GM12878 (cell line): ENCODE measurements at regions of chr17 and their contacts with region 1.

Region 1: GRCh38 chr17:5065227-5065744 is 13.0 kb upstream of the ZFP3 start:
- DNase-seq: no peak
- ATAC-seq: no peak
- H3K4me3 ChIP-seq: no peak overlapping the region
- H3K27ac ChIP-seq: no peak overlapping the region
- H3K4me1 ChIP-seq: no peaks in the 10 kb centered on the region
- H3K27me3 ChIP-seq: no peaks in the 10 kb centered on the region
- CTCF ChIP-seq: no peak
- EP300 ChIP-seq: no peak
- POLR2A ChIP-seq: no peak
- RAD21 ChIP-seq: no peak

Region 2: DNA sequence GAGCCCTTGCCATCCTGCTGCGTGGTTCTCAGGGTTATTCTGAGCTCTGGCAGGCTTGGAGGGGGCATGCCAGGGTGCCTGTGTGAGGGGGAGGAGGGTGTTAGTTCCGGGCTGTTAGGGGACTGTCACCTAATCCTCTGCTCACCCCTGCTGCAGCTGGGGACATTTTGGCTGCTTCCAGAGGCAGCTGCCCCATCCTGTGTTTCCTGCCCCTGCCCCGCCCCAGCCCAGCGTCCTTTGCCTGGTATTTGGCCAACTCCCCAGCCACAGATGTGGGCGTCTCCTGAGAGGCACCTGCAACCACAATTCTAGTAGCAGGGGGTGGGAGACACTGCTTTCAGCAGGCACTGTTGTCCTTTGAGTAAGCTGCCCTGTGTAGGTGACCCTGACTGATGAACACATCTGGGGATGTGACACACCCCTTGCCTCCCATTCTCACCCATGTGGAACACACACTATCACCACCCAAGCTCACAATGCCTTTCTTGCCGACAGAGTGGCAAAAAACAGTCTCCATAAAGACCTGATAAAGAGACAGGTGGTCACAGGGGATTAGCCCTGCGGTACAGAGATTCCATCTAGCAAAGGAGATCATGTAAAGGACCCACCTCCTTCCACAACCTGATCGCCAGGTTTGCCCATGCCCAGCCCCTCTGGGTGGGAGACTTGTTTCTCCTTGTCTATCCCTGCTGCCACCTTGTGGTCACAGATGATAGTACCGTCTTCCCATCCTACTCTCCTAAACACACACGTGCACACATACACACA is 162.1 kb before region 1 on chr17 and contains the start of gene CHRNE:
- CTCF ChIA-PET with region 1: interaction called, 35 read pairs
- POLR2A ChIA-PET with region 1: no interaction called
- RAD21 ChIA-PET with region 1: no interaction called
- SMC1A ChIA-PET with region 1: interaction called, 5 read pairs
- in situ Hi-C with region 1: no loop called
- intact Hi-C with region 1: no loop called
- DNase-seq: peak; percentile 37
- ATAC-seq: peak; percentile 80
- H3K4me3 ChIP-seq: no peak within 1 kb of the TSS
- H3K27ac ChIP-seq: no peak within 1 kb of the TSS
- H3K4me1 ChIP-seq: peaks cover 20% of the 10 kb centered on the region
- H3K27me3 ChIP-seq: no peaks in the 10 kb centered on the region; a peak in 2 of 4 replicates
- CTCF ChIP-seq: peak; percentile 73 to 81 (median 77)
- EP300 ChIP-seq: no peak
- POLR2A ChIP-seq: no peak
- RAD21 ChIP-seq: peak; percentile 51
- polyA plus RNA-seq, gene CHRNE: 0.05 TPM in 1 of 2 experiments, not detected in the other

Region 3: GRCh38 chr17:4974115-4974670 is 91.1 kb before region 1 on chr17:
- CTCF ChIA-PET with region 1: interaction called, 55 read pairs
- POLR2A ChIA-PET with region 1: interaction called, 3 read pairs
- RAD21 ChIA-PET with region 1: interaction called, 3 read pairs
- SMC1A ChIA-PET with region 1: interaction called, 29 read pairs
- in situ Hi-C with region 1: no loop called
- intact Hi-C with region 1: loop called (anchors 5 kb)
- DNase-seq: no peak
- ATAC-seq: no peak
- H3K4me3 ChIP-seq: no peak overlapping the region
- H3K27ac ChIP-seq: no peak overlapping the region
- H3K4me1 ChIP-seq: peaks cover 3% of the 10 kb centered on the region; the same call in 1 of the 2 replicates
- H3K27me3 ChIP-seq: no peaks in the 10 kb centered on the region
- CTCF ChIP-seq: no peak
- EP300 ChIP-seq: no peak
- POLR2A ChIP-seq: no peak
- RAD21 ChIP-seq: no peak

Region 4: DNA sequence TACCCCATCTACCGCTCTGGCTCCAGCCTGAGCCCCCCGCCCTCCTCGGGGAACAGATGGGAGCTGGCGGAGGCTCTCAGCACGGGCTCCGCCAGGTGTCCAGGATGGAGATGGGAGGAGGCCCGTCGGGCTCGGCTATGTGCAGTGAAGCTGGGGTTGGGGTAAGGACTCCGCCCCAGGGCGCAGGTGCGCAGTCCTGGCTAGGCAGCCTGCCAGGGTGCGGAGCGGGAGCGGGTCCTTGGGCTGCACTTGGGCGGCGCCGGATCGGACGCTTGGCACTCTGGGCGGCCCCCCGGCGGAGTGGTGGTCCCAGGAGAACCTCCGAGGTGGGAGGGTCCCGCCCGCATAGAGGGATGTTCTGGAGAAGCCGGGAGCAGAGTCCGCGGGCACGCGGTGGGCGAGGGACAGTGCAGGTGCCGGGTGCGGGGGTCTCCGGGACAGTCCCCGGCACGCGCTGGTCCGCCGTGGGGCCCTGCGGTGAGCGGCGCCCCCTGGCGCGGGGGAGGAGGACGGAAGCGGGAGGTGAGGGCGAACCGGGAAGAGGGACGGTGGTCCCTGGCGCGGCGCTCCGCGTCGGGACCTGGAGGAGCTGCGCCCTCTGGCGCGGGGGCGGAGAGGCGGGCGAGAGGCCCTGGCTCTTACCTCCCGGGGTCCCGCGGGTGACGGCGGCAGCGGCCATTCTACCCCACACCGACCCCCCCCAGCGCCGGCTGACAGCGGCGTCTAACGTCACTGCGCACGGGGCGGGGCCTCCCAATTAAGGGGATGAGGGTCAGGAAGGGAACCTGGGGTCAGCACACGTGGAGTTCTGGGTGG is 78.1 kb before region 1 on chr17 and contains the start of gene CAMTA2:
- CTCF ChIA-PET with region 1: interaction called, 18 read pairs
- POLR2A ChIA-PET with region 1: interaction called, 4 read pairs
- RAD21 ChIA-PET with region 1: interaction called, 4 read pairs
- SMC1A ChIA-PET with region 1: interaction called, 10 read pairs
- in situ Hi-C with region 1: loop called (anchors 5 kb)
- intact Hi-C with region 1: no loop called
- DNase-seq: no peak
- ATAC-seq: peak; percentile 92
- H3K4me3 ChIP-seq: peak within 1 kb of the TSS; percentile 74
- H3K27ac ChIP-seq: peak within 1 kb of the TSS; percentile 90
- H3K4me1 ChIP-seq: peaks cover 19% of the 10 kb centered on the region
- H3K27me3 ChIP-seq: no peaks in the 10 kb centered on the region
- CTCF ChIP-seq: peak; percentile 61 to 66 (median 66); a peak in 5 of 6 replicates
- EP300 ChIP-seq: no peak
- POLR2A ChIP-seq: peak; percentile 89
- RAD21 ChIP-seq: peak; percentile 33
- polyA plus RNA-seq, gene CAMTA2: 0.42 to 1.7 TPM

Region 5: DNA sequence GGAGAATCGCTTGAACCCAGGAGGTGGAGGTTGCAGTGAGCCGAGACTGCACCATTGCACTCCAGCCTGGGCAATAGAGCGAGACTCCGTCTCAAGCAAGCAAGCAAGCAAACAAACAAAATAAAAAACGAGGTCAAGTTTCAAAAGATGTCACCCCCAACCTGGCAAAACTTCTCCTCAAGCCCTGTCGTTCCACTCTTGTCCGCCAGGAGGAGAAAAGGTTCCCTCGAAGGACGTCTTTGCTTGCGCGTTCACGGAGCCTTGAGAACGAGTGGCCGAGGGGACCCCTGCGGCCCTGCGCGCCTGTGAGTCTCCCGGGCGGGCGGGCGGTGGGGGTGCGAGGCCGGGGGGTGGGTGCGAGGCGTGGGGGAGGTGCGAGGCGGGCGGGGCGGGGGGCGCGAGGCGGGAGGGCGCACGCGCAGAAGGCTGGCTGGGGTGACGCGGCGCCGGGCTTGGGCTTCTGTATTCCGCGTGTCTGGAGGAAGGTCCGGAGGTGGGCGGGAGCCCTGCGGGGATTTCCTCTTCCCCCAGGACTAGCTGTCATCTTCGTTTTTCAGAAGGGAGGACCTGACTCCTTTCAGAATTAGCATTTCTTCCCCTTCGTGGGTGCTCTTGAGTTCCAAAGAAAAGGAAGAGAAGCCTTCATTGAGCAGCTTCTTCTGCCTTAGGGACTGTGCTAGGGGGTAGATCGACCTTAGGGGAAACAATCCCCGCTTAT is 33.8 kb before region 1 on chr17:
- CTCF ChIA-PET with region 1: interaction called, 45 read pairs
- POLR2A ChIA-PET with region 1: interaction called, 5 read pairs
- RAD21 ChIA-PET with region 1: interaction called, 15 read pairs
- SMC1A ChIA-PET with region 1: interaction called, 38 read pairs
- in situ Hi-C with region 1: no loop called
- intact Hi-C with region 1: loop called (anchors 2 kb)
- DNase-seq: peak; percentile 55
- ATAC-seq: peak; percentile 92
- H3K4me3 ChIP-seq: peak overlapping the region; percentile 46
- H3K27ac ChIP-seq: peak overlapping the region; percentile 66
- H3K4me1 ChIP-seq: peaks cover 14% of the 10 kb centered on the region
- H3K27me3 ChIP-seq: no peaks in the 10 kb centered on the region
- CTCF ChIP-seq: peak; percentile 67 to 81 (median 69)
- EP300 ChIP-seq: no peak
- POLR2A ChIP-seq: no peak; the same call in 1 of the 2 replicates
- RAD21 ChIP-seq: peak; percentile 70